ENCODE measurements at regions of chr13 and their contacts with region 1.

Region 1: DNA sequence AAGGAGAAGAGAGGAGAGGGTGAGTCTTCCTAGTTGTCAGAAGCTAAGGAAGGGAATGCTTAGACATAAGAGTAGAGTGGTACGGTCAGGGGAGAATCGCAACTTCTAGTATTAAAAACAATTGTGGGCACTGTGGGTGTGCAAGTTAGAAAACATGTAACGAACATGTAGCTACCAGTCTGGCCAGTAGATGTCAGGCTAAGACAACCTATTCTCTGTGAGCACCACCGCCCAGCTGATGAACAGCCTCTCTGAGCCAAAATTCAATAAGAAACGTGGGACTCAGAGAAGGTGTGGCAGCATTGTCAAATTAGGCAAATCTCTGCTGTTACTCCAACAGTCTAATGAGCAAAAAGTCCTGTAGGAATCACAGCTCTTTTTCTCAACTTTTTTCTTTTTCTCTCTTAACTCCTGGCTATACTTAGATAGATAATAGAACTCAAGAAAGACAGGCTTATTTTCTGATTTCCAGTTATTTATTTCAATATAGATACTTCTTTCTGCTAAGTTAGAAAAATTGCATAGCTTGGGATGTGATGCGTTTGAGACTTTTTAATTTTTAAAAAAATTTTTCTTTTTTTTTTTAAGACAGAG is 186.2 kb downstream of the USP12 start:
- DNase-seq: peak; percentile 70
- CTCF ChIP-seq: peak; percentile 84

Region 2: DNA sequence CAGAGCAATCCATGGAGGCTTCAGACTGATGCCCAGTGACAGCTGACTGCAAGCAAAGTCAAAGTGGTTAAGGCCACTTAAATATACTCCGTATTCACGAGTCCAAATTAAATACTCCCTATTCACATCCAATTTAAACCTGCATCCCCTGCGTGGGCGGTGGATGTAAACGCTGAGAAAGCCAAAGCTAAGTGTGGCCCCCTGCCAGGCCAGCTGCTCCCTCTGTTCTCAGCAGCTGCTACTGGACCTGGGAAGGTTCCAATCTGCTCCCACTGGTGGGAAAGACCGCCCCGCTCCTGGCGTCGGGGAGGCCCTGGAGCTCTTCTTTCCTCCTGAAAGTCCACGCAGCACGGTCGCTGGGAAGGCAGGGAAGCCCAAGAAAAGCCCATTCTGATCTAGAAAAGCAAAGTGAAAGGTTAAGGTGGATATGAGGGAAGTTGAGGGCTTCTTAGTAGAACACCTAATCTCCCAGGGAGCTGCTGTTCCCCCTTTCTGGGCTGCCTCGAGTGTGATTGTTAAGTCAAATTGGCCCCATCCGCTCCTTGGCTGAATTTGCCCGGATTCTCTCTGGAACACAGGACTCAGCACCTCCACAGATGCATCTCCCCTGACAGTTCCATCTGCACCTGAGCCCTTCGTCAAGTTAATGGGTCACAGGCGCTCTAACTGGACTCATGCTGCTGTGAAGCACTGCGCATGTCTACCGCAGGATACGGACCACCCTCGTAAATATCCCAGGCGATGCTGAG is 19.3 kb before region 1 on chr13:
- CTCF ChIA-PET with region 1: interaction called, 13 read pairs
- POLR2A ChIA-PET with region 1: no interaction called
- DNase-seq: no peak
- CTCF ChIP-seq: no peak

Region 3: GRCh38 chr13:27004326-27004725 is 18.9 kb after region 1 on chr13:
- CTCF ChIA-PET with region 1: interaction called, 12 read pairs
- POLR2A ChIA-PET with region 1: no interaction called
- DNase-seq: no peak
- CTCF ChIP-seq: no peak

Region 4: DNA sequence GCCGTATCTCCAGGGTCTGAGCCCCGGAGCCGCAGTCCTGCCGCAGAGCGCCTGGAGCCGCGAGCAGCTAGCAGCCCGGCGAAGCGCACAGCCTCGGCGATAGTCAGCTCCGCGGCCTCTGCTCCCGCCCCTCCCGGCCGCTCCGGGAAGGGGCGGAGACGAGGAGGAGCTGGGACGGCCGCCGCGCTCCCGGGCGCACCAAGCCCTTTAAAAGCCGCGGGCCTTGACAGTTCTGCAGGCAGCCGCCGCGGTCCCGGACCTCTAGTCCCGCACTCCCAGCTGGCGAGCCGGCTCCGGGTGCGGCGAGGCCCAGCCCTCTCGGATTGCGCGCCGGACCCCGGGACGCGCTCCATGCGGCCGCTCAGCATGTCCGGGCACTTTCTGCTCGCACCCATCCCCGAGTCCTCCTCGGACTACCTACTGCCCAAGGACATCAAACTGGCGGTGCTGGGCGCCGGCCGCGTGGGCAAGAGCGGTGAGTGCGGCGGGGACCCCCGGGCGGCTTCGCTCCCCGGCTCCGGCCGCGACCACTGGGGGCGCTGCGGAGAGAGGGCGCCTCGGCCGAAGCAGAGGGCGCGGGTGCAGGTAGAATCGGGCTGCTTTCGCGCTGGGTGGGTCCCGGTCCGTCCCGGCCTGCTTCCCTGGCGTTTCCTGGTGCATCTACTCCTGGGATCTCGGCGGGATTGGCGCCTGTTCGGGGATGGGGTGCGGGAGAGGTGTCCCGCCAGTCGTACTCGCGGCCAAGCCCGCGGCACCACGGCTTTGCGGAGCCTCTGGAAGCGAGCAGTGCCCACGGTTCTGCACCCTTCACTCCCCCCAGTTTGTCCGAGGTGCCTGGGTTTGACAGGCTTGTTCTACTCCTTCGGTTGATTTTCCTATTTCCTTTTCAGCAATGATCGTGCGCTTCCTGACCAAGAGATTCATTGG is 285.5 kb after region 1 on chr13 and contains the start of gene RASL11A:
- CTCF ChIA-PET with region 1: interaction called, 24 read pairs
- POLR2A ChIA-PET with region 1: no interaction called
- DNase-seq: peak; percentile 87
- CTCF ChIP-seq: peak; percentile 77

Region 5: DNA sequence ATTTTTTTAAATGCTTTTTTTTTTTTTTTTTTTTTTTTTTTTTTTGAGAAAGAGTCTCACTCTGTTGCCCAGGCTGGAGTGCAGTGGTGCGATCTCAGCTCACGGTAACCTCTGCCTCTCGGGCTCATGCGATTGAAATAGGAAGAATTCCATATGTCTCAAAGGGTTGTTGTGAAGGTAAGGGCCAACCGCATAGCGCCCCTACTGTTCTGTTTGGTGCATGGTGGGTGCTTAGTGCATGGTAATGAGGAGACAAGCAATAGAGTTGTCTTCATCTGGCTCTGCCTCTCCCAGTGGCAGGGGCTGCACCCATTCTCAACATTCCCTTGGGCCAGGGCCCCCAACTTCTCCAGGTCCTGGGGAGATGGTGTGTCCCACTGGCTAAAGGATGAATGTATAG is 353.9 kb after region 1 on chr13:
- CTCF ChIA-PET with region 1: interaction called, 10 read pairs
- POLR2A ChIA-PET with region 1: no interaction called
- DNase-seq: peak; percentile 62
- CTCF ChIP-seq: peak; percentile 68

Region 6: DNA sequence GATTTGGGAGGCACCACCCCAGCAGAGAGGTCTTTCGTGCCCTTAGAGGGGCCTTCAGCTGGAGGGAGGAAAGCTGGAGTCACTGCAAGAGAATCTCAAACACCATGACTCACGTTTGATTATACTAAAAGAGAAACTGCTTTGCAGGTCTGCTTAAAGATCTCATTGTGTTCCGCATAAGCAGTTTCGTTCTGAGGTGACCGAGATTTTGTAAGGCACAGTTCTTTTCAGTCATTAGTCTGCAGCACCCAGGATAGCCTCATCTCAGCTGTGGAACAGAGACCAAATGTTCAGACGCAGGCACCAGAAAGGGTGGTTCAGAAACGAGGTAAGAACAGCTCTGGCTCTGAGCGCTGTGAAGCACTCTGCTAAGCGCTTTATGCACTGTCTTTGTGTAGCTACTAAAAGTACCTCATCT is 367.8 kb after region 1 on chr13:
- CTCF ChIA-PET with region 1: interaction called, 252 read pairs
- POLR2A ChIA-PET with region 1: no interaction called
- DNase-seq: peak; percentile 91
- CTCF ChIP-seq: no peak

Region 7: GRCh38 chr13:27599845-27600553 is 614.6 kb after region 1 on chr13:
- CTCF ChIA-PET with region 1: no interaction called
- POLR2A ChIA-PET with region 1: no interaction called
- DNase-seq: no peak
- CTCF ChIP-seq: no peak

Region 8: GRCh38 chr13:27985600-27985999 is 1000.2 kb after region 1 on chr13:
- CTCF ChIA-PET with region 1: interaction called, 16 read pairs
- POLR2A ChIA-PET with region 1: no interaction called
- DNase-seq: no peak
- CTCF ChIP-seq: no peak